ENCODE measurements at regions of chr17 and their contacts with region 1.

Region 1: DNA sequence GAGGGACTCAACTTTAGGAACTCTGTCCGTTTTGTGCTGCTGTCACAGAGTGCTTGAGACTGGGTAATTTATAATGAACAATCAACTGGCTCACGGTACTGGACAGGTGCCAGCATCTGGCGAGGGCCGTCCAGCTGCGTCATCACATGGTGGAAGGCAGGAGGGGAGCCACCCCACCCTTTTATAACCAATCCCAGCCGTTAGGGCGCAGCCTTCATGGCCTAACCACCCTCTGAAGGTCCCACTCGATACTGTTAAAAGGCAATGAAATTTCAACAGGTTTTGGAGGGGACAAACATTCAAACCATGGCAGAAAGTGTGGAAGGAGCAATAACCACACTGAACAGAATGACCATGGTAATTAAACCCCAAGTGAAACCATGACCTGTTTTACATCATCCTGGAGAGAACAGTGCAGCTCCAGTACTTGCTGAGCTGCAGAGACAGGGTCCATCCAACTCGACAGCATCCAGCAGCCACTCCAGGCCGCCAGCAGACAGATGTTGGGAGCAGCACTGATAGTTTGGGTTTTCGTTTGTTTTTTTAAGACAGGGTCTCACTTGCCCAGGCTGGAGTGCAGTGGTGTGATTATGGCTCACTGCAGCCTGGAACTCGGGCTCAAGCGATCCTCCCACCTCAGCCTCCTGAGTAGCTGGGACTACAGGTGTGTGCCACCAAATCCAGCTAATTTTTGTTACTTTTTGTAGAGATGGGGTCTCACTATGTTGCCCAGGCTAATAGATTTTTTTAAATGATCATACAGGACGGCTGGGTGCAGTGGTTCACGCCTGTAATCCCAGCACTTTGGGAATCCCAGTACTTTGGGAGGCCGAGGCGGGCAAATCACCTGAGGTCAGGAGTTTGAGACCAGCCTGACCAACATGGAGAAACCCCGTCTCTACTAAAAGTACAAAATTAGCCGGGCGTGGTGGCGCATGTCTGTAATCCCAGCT is 11.0 kb downstream of the CHMP6 start:
- DNase-seq: no peak
- ATAC-seq: peak; percentile 36
- H3K4me3 ChIP-seq: no peak overlapping the region
- H3K27ac ChIP-seq: no peak overlapping the region; the same call in 1 of the 2 replicates
- H3K4me1 ChIP-seq: peaks cover 11% of the 10 kb centered on the region
- H3K27me3 ChIP-seq: peaks cover 9% of the 10 kb centered on the region
- CTCF ChIP-seq: no peak

Region 2: DNA sequence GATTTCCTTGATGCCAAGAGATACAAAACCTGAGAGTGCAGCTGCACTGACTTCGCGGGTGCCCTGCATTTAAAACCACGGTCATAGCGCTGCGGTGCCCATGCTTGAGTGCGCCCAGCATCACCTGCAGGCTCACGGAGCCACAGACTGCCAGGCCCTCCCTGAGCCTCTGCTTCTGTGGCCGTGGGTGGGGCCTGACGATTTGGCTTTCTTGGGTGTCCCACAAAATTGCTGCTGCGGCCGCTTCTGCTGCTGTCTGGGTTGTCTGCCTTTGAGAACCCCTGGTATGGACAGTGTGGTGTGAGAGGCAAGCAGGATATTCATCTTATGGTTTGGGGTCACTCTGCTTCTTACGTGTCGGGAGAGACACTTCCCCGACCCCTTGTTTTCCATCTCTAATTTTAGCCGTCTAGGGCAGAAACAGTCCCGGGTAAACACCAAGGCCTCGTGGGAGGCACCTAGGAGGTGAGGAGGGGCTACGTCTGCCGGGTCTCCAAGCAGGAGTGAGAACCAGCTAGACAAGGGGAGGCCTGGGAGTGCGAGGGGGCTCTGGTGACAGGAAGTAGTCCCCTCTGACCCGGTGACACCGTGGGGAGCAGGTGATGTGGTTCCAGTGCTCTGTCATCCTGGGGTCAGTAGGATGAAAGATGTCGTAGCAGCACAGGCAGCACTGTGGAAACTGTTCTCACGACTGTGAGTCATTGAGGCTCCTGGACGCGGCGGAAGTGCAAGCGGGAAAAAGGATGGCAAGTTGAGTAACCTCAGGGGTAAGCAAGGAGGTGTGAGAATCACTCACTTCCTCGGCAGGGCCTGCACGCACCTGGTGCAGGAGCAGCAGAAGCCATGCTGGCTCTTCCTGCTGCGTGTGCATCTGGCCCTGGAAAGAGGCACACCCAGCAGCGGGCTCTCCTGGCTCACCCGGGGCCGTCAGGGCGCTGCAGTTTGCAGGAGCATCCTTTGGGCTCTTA is 281.8 kb before region 1 on chr17:
- CTCF ChIA-PET with region 1: no interaction called
- POLR2A ChIA-PET with region 1: no interaction called
- in situ Hi-C with region 1: no loop called
- intact Hi-C with region 1: no loop called
- DNase-seq: peak; percentile 20
- ATAC-seq: peak; percentile 85
- H3K4me3 ChIP-seq: no peak overlapping the region; a peak in 1 of 4 replicates
- H3K27ac ChIP-seq: peak overlapping the region; percentile 59; the same call in 1 of the 2 replicates
- H3K4me1 ChIP-seq: peaks cover 8% of the 10 kb centered on the region
- H3K27me3 ChIP-seq: no peaks in the 10 kb centered on the region
- CTCF ChIP-seq: no peak

Region 3: DNA sequence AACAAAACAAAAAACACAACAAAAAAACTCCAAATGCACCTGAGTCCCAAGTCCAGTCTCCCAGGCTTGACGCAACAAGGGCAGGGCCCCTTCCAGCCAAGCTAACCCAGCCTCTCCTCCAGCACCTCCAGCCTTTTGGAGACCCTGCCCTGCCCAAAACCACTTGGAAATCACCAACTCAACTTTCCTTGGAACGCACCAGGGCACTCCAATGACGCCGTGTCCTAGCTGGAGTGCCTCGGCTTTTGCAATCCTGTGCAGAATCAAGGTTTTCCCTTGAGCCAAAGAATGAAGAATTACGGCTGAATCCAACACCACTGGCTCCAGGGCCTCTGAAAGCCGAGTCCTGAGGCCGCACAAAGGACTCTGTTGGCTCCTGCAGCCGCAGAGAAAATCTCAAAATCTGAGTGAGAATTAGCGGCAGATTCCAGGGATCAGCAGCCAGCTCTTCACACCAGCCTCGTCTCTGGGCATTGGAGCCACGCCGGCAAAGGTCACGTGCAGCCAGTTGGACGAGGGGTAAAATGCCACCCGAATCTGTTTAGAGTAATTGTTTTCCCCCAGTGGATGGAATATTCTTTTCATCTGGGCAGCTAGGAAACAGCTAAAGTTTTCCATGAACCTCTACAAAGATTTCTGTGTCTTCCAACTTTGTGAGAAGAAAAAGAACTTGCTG is 22.5 kb after region 1 on chr17:
- CTCF ChIA-PET with region 1: interaction called, 11 read pairs
- POLR2A ChIA-PET with region 1: no interaction called
- in situ Hi-C with region 1: no loop called
- intact Hi-C with region 1: no loop called
- DNase-seq: no peak
- ATAC-seq: no peak
- H3K4me3 ChIP-seq: no peak overlapping the region
- H3K27ac ChIP-seq: no peak overlapping the region
- H3K4me1 ChIP-seq: peaks cover 17% of the 10 kb centered on the region
- H3K27me3 ChIP-seq: no peaks in the 10 kb centered on the region
- CTCF ChIP-seq: no peak